Activated B cell treated with CpG ODN at 0.5 μM for 24 hours (primary cell): ENCODE measurements at regions of chr19 and their contacts with region 1.

Region 1: GRCh38 chr19:53553884-53554791 is 16.2 kb downstream of the ZNF331 start:
- DNase-seq: peak; percentile 82
- ATAC-seq: peak; percentile 81
- H3K4me3 Mint-ChIP-seq: peak overlapping the region; percentile 89
- H3K27ac Mint-ChIP-seq: peak overlapping the region; percentile 91
- H3K4me1 Mint-ChIP-seq: peaks cover 27% of the 10 kb centered on the region
- H3K27me3 Mint-ChIP-seq: no peaks in the 10 kb centered on the region
- CTCF ChIP-seq: no peak

Region 2: DNA sequence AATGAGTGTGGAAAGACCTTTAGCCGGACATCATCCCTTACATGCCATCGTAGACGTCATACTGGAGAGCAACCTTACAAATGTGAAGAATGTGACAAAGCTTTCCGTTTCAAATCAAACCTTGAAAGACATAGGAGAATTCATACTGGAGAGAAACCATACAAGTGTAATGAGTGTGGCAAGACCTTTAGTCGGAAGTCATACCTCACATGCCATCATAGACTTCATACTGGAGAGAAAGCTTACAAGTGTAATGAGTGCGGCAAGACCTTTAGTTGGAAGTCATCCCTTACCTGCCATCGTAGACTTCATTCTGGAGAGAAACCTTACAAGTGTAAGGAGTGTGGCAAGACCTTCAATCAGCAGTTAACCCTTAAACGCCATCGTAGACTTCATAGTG is 98.3 kb before region 1 on chr19:
- CTCF ChIA-PET with region 1: no interaction called
- POLR2A ChIA-PET with region 1: no interaction called
- intact Hi-C with region 1: no loop called
- DNase-seq: no peak
- ATAC-seq: no peak
- H3K4me3 Mint-ChIP-seq: no peak overlapping the region
- H3K27ac Mint-ChIP-seq: no peak overlapping the region
- H3K4me1 Mint-ChIP-seq: no peaks in the 10 kb centered on the region
- H3K27me3 Mint-ChIP-seq: no peaks in the 10 kb centered on the region
- CTCF ChIP-seq: no peak

Region 3: DNA sequence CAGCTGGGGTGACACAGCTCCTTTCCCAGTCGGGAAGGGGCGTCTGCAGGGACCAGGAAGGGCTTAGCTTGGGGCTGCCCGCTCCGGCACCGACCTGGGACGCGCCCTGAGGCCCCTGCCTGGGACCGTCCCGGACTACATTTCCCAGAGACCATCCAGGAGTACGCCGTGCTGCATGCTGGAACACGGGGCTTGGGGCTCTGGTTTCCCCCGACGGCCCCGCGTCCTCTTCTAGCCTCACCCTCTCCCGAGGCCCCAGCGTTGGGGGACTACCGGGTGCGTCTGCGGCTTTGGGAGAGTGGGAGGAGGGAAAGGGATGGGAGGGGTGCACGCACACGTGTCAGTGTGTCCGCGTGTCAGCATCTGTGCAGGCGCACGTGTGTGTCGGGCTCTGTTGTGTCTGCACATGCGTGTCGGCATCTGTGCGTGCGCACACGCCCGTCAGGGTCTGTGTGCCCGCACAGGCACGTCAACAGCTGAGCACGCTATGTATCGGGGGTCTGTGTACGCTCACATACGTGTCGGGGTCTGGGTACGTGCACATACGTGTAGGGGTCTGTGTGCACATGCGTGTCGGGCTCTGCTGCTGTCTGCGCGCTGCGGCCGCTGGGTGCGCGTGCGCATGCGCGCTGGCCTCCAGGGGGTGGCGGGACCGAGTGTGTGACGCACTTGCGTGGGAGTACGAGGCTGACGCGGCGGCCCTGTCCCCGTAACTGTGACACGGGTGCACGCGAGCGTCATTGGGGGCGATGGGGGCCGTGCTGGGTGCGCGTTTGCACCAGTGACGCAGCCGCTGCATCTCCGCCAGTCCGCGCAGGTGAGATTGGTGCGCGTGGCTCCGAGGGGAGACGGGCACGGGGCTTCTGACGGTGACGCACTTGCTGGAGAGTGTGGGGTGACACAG is 16.4 kb before region 1 on chr19 and contains the start of gene ZNF331:
- CTCF ChIA-PET with region 1: no interaction called
- POLR2A ChIA-PET with region 1: interaction called, 5 read pairs
- intact Hi-C with region 1: loop called (anchors 1 kb)
- DNase-seq: peak; percentile 85
- ATAC-seq: peak; percentile 76
- H3K4me3 Mint-ChIP-seq: peak within 1 kb of the TSS; percentile 95
- H3K27ac Mint-ChIP-seq: peak within 1 kb of the TSS; percentile 95
- H3K4me1 Mint-ChIP-seq: peaks cover 18% of the 10 kb centered on the region
- H3K27me3 Mint-ChIP-seq: no peaks in the 10 kb centered on the region
- CTCF ChIP-seq: no peak
- total RNA-seq, gene ZNF331: 25.5 and 31.7 TPM in 2 replicates